HepG2 (cell line): ENCODE measurements at regions of chr2 and their contacts with region 1.

Region 1: GRCh38 chr2:169452080-169452479 is 27.2 kb upstream of the BBS5 start:
- DNase-seq: peak; percentile 61
- ATAC-seq: peak; percentile 88
- H3K4me3 ChIP-seq: no peak overlapping the region
- H3K27ac ChIP-seq: no peak overlapping the region
- H3K4me1 ChIP-seq: peaks cover 13% of the 10 kb centered on the region; the same call in 1 of the 2 replicates
- H3K27me3 ChIP-seq: peaks cover 0 to 5% of the 10 kb centered on the region in 2 experiments; a peak in 1 of 5 replicates
- CTCF ChIP-seq: peak; percentile 72
- EP300 ChIP-seq: no peak
- POLR2A ChIP-seq: no peak
- RAD21 ChIP-seq: no peak

Region 2: GRCh38 chr2:169486487-169486886 is 34.4 kb after region 1 on chr2:
- CTCF ChIA-PET with region 1: no interaction called
- POLR2A ChIA-PET with region 1: no interaction called
- in situ Hi-C with region 1: no loop called
- intact Hi-C with region 1: no loop called
- DNase-seq: no peak
- ATAC-seq: no peak
- H3K4me3 ChIP-seq: no peak overlapping the region
- H3K27ac ChIP-seq: peak overlapping the region; percentile 9
- H3K4me1 ChIP-seq: peaks cover 37% of the 10 kb centered on the region
- H3K27me3 ChIP-seq: no peaks in the 10 kb centered on the region
- CTCF ChIP-seq: no peak
- EP300 ChIP-seq: no peak
- POLR2A ChIP-seq: no peak
- RAD21 ChIP-seq: no peak

Region 3: DNA sequence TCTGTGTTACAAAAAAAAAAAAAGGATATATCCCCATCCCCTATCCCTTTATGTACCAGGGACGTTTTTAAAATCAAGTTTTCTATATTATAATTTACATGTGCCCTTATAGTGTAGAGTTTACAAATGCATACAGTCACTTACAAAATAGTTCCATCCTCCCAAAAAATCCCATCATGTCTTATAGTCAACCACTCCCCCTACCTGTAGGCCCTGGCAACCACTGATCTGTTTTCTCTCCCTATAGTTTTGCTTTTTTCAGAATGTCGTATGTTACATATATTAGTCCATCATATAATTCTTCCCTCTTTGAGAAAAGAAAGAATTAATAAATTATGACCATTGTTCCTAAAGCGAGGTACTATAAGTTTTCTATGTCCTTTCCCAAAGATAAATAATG is 224.3 kb after region 1 on chr2:
- CTCF ChIA-PET with region 1: interaction called, 3 read pairs
- POLR2A ChIA-PET with region 1: no interaction called
- in situ Hi-C with region 1: no loop called
- intact Hi-C with region 1: loop called (anchors 2 kb)
- DNase-seq: no peak
- ATAC-seq: peak; percentile 80
- H3K4me3 ChIP-seq: no peak overlapping the region
- H3K27ac ChIP-seq: no peak overlapping the region
- H3K4me1 ChIP-seq: peaks cover 13% of the 10 kb centered on the region
- H3K27me3 ChIP-seq: no peaks in the 10 kb centered on the region
- CTCF ChIP-seq: peak; percentile 56
- EP300 ChIP-seq: no peak
- POLR2A ChIP-seq: no peak
- RAD21 ChIP-seq: peak; percentile 60; the same call in 1 of the 2 replicates

Region 4: DNA sequence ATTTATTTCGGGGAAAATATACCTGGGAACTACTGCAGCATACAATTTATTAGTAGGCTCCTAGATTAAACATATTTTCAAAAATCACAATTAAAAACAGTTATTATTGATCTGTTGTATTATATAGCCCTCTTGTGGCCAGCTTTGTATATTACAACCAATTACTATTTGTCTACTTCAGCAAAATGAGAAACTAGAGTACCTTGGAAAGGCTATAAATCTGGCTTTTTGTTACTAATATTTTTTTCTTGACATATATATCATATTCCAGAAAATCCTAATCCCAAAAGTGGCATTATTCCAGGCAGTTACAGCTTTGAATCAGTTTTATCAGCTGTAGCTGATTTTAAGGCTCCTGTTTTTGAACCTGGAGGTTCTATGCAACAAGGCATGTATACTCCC is 476.4 kb after region 1 on chr2:
- CTCF ChIA-PET with region 1: interaction called, 7 read pairs
- POLR2A ChIA-PET with region 1: no interaction called
- in situ Hi-C with region 1: no loop called
- intact Hi-C with region 1: loop called (anchors 1 kb)
- DNase-seq: peak; percentile 48
- ATAC-seq: no peak
- H3K4me3 ChIP-seq: no peak overlapping the region
- H3K27ac ChIP-seq: no peak overlapping the region
- H3K4me1 ChIP-seq: no peaks in the 10 kb centered on the region
- H3K27me3 ChIP-seq: no peaks in the 10 kb centered on the region
- CTCF ChIP-seq: peak; percentile 57
- EP300 ChIP-seq: no peak
- POLR2A ChIP-seq: no peak
- RAD21 ChIP-seq: 0 out of 2 replicates have a peak, but pooled peaks have one; percentile 27

Region 5: DNA sequence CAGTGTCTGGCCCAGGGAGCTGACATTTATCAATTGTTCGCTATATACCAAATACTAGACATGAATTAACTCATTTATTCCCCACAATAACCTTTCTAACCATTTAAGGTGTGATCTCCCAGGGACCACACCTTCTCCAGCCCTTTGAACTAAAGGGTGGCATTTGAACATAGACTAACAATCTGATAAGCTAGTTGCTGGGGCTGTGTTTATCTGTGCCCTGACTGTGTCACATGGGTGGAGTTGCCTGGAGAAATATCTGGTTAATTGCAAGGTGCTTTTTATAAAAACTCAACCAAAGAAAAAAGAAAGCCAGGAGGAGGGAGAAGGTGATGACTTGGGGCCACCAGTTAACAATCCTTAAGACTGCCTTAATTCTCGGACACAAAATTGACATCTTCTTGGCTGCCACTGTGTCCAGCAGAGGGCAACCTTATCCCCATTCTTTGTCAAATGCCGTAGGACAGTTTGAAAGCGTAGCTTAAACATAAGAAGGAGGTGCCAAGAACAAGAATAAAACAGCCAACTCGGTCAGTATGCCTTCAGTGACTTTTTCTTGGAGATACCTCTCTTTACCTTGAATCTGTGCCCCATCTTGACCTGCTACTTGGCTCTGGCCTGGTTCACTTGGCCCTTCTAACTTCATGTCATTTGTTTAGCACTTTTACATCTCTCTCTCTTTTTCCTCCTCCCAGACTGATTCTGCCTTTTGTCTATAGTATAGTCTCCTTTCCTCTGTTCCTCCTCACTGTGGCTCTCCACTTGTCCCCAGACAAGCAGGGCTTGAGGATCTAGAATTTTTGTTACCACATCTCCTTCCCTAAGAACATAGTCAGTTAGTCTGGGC is 909.2 kb after region 1 on chr2:
- CTCF ChIA-PET with region 1: no interaction called
- POLR2A ChIA-PET with region 1: no interaction called
- in situ Hi-C with region 1: loop called (anchors 25 kb)
- intact Hi-C with region 1: no loop called
- DNase-seq: peak; percentile 48
- ATAC-seq: peak; percentile 93
- H3K4me3 ChIP-seq: no peak overlapping the region
- H3K27ac ChIP-seq: no peak overlapping the region
- H3K4me1 ChIP-seq: no peaks in the 10 kb centered on the region
- H3K27me3 ChIP-seq: peaks cover 2 to 39% of the 10 kb centered on the region in 2 experiments; a peak in 4 of 5 replicates
- CTCF ChIP-seq: peak; percentile 84
- EP300 ChIP-seq: no peak
- POLR2A ChIP-seq: no peak
- RAD21 ChIP-seq: peak; percentile 59; the same call in 1 of the 2 replicates